ENCODE measurements at regions of chr3 and their contacts with region 1.

Region 1: GRCh38 chr3:73508330-73508954 is 116.3 kb downstream of the PDZRN3 start:
- DNase-seq: no peak
- H3K4me3 ChIP-seq: no peak overlapping the region
- H3K27ac ChIP-seq: peak overlapping the region; percentile 85 to 90 (median 86)
- H3K4me1 ChIP-seq: peaks cover 0 to 93% (median 75%) of the 10 kb centered on the region in 4 donors
- H3K27me3 ChIP-seq: no peaks in the 10 kb centered on the region
- CTCF ChIP-seq: peak in 3 of 4 experiments; percentile 69 to 79 (median 70)
- EP300 ChIP-seq: no peak
- POLR2A ChIP-seq: no peak

Region 2: DNA sequence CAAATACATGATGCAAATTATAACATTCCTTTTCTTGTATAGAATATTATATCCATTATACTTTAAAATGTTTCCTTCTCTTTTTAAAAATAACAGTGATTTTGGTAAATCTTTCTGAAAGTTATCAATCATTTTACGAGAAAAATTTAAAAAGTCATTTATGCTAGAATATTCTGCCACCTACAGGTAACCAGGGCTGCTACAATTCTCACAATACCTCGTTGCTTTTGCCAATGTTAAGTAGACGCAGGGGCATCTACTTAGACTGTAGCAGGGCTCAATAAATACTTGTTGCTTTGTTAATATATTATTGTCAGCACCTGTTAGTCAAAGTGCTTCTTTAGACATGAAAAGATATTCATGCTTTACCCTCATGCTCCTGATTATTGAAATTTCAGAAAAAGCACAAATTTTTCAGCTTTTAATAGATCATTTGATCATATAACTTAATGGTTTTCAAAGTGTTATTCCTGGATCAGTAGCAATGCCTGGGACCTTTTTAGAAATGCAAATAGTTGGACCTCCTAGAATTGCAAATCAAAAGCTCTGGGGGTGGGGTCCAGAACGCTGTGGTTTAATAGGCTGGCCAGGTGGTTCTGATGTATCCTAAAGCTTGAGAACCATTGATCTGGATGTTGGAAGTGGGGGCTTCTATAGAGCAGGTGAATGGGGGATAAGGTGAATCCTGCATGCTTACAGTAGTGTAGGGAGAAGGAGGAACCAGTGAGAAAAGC is 339.9 kb after region 1 on chr3:
- intact Hi-C with region 1: loop called (anchors 5 kb)
- DNase-seq: no peak
- H3K4me3 ChIP-seq: no peak overlapping the region
- H3K27ac ChIP-seq: no peak overlapping the region
- H3K4me1 ChIP-seq: peaks cover 0 to 11% (median 3%) of the 10 kb centered on the region in 4 donors
- H3K27me3 ChIP-seq: no peaks in the 10 kb centered on the region
- CTCF ChIP-seq: peak; percentile 39 to 76 (median 70)
- EP300 ChIP-seq: no peak
- POLR2A ChIP-seq: no peak

Measured in sigmoid colon (tissue), 7 donors.